A673 (cell line): ENCODE measurements at regions of chr18 and their contacts with region 1.

Region 1: GRCh38 chr18:62249478-62250097 is 62.5 kb downstream of the RELCH start:
- DNase-seq: peak; percentile 74
- H3K4me3 ChIP-seq: no peak overlapping the region
- H3K27ac ChIP-seq: no peak overlapping the region
- H3K4me1 ChIP-seq: no peaks in the 10 kb centered on the region
- H3K27me3 ChIP-seq: no peaks in the 10 kb centered on the region
- CTCF ChIP-seq: peak; percentile 80

Region 2: DNA sequence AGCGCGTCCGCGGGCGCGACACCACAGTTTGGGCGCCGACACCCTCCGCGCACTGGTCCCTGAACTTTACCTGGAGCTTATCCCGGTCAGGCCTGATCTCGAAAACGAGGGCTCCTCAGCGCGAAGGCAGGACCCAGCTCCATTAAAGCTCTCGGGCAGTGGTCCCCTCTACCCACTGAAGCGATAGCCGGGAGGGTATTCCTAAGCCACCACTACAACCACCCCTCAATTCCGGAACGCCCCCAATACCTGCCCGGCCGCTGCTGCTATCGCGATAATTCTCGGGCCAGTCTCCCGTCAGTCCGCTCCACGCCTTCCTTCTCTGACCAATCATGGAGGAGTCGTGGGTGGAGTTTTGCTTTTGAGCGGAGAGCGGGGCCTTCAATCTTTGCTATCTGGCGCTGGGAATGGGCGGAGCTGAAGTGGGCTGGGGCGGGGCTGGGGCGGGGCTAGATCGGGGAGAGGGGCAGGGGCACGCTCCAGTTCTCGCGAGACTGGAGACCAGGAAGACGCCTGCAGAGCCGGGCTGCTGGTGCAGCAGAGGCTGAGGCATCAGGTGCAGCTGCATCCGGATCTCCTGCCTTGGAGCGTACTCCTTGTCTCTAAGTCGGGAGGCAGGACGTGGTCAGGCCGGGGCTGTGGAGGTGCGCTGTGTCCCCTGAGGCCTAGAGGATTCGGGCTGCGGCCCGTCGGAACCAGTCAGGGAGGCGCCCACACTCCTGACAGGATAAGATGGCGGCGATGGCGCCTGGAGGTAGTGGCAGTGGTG is 62.6 kb before region 1 on chr18 and contains the starts of genes PIGN and RELCH:
- CTCF ChIA-PET with region 1: no interaction called
- POLR2A ChIA-PET with region 1: no interaction called
- intact Hi-C with region 1: loop called (anchors 1 kb)
- DNase-seq: peak; percentile 99
- H3K4me3 ChIP-seq: peak within 1 kb of the TSS; percentile 98
- H3K27ac ChIP-seq: peak within 1 kb of the TSS; percentile 74
- H3K4me1 ChIP-seq: peaks cover 18% of the 10 kb centered on the region
- H3K27me3 ChIP-seq: no peaks in the 10 kb centered on the region
- CTCF ChIP-seq: no peak
- total RNA-seq, gene PIGN: 21.3 and 23.8 TPM in 2 replicates
- total RNA-seq, gene RELCH: 29.2 and 31.6 TPM in 2 replicates